Natural killer cell (primary cell): ENCODE measurements at regions of chr2 and their contacts with region 1.

Region 1: GRCh38 chr2:165794536-165794928 is 485 bp upstream of the GALNT3 start:
- DNase-seq: peak; percentile 64 to 76
- ATAC-seq: peak; percentile 86 to 92 (median 91)
- H3K4me3 ChIP-seq: peak overlapping the region; percentile 93
- H3K4me3 Mint-ChIP-seq: peak overlapping the region; percentile 99
- H3K27ac ChIP-seq: peak overlapping the region; percentile 94
- H3K27ac Mint-ChIP-seq: peak overlapping the region; percentile 85 to 92
- H3K4me1 ChIP-seq: peaks cover 15% of the 10 kb centered on the region
- H3K4me1 Mint-ChIP-seq: peaks cover 59 to 74% of the 10 kb centered on the region in 2 donors
- H3K27me3 ChIP-seq: no peaks in the 10 kb centered on the region
- H3K27me3 Mint-ChIP-seq: no peaks in the 10 kb centered on the region
- CTCF ChIP-seq: no peak

Region 2: GRCh38 chr2:165440367-165440766 is 354.2 kb before region 1 on chr2:
- intact Hi-C with region 1: loop called (anchors 5 kb)
- DNase-seq: peak in 1 of 2 donors; percentile 17
- ATAC-seq: no peak
- H3K4me3 ChIP-seq: no peak overlapping the region
- H3K4me3 Mint-ChIP-seq: no peak overlapping the region
- H3K27ac ChIP-seq: peak overlapping the region; percentile 43
- H3K27ac Mint-ChIP-seq: peak overlapping the region; percentile 65 to 83
- H3K4me1 ChIP-seq: peaks cover 20% of the 10 kb centered on the region
- H3K4me1 Mint-ChIP-seq: peaks cover 47 to 52% of the 10 kb centered on the region in 2 donors
- H3K27me3 ChIP-seq: no peaks in the 10 kb centered on the region
- H3K27me3 Mint-ChIP-seq: no peaks in the 10 kb centered on the region
- CTCF ChIP-seq: no peak

Region 3: GRCh38 chr2:165953655-165954606 is 159.4 kb after region 1 on chr2 and contains the start of gene TTC21B:
- intact Hi-C with region 1: loop called (anchors 5 kb)
- DNase-seq: peak; percentile 90 to 96
- ATAC-seq: peak; percentile 93 to 98 (median 94)
- H3K4me3 ChIP-seq: peak within 1 kb of the TSS; percentile 78
- H3K4me3 Mint-ChIP-seq: no peak within 1 kb of the TSS
- H3K27ac ChIP-seq: peak within 1 kb of the TSS; percentile 74
- H3K27ac Mint-ChIP-seq: no peak within 1 kb of the TSS
- H3K4me1 ChIP-seq: peaks cover 5% of the 10 kb centered on the region
- H3K4me1 Mint-ChIP-seq: peaks cover 11 to 13% of the 10 kb centered on the region in 2 donors
- H3K27me3 ChIP-seq: no peaks in the 10 kb centered on the region
- H3K27me3 Mint-ChIP-seq: no peaks in the 10 kb centered on the region
- CTCF ChIP-seq: peak; percentile 85
- total RNA-seq, gene TTC21B: 31.7 to 40.1 (median 34.3) TPM